ENCODE measurements at regions of chr11 and their contacts with region 1.

Region 1: DNA sequence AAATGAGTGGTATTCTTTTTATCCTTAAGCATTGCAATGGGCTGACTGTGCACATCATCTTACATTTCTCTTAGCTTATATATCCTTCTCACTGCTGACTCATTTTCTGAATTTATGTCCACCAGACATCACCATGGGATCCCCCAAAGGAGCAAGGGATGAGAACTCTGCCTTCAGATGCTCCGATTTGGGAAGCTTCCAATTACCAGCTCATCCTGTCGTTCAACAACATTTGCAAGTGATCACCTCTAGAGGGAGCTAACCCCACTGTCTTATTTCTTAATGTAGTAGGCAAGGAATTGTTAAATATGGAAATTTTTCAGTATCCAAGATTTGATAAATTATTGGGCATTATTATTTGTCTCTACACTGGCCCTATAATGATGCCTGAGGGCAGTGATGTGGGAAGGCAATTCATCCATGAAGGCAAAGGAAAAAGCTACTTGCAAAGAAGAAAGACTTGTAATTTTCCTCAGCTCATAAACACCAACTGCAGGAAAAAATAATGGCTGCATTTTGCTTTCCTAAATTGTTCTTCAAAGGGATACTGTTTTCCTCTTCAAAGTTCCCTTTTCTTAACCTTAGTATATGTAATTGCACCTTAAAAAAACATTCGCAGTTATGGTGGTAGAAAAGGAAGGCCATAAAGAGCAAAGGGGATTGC is 102.4 kb upstream of the FSHB start:
- DNase-seq: no peak
- H3K4me3 ChIP-seq: no peak overlapping the region
- H3K27ac ChIP-seq: no peak overlapping the region
- H3K4me1 ChIP-seq: no peaks in the 10 kb centered on the region
- H3K27me3 ChIP-seq: peaks cover 0 to 1% (median 0%) of the 10 kb centered on the region in 4 experiments; a peak in 2 of 7 replicates
- CTCF ChIP-seq: peak in 2 of 3 experiments; percentile 52 to 69; a peak in 2 of 4 replicates
- EP300 ChIP-seq: no peak
- POLR2A ChIP-seq: no peak
- RAD21 ChIP-seq: peak; percentile 53 to 56

Region 2: GRCh38 chr11:29669310-29669709 is 459.1 kb before region 1 on chr11:
- CTCF ChIA-PET with region 1: no interaction called
- POLR2A ChIA-PET with region 1: no interaction called
- DNase-seq: no peak
- H3K4me3 ChIP-seq: no peak overlapping the region
- H3K27ac ChIP-seq: no peak overlapping the region
- H3K4me1 ChIP-seq: no peaks in the 10 kb centered on the region
- H3K27me3 ChIP-seq: no peaks in the 10 kb centered on the region
- CTCF ChIP-seq: no peak
- EP300 ChIP-seq: no peak
- POLR2A ChIP-seq: no peak
- RAD21 ChIP-seq: no peak

Region 3: DNA sequence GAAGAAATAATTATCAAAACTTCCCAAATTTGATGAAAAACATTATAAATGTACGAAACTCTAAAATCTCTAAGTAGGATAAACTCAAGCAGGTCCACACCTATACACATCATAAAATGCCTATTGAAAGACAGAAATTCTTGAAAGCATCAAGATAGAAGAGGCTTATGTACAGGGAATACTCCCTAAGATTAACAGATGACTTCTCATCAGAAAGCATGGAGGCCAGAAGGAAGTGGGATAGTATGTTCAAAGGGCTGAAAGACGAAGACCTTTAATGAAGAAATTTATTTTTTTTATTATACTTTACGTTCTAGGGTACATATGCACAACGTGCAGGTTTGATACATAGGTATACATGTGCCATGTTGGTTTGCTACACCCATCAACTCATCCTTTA is 66.3 kb before region 1 on chr11:
- CTCF ChIA-PET with region 1: interaction called, 10 read pairs
- POLR2A ChIA-PET with region 1: no interaction called
- DNase-seq: no peak
- H3K4me3 ChIP-seq: no peak overlapping the region
- H3K27ac ChIP-seq: no peak overlapping the region
- H3K4me1 ChIP-seq: no peaks in the 10 kb centered on the region
- H3K27me3 ChIP-seq: no peaks in the 10 kb centered on the region
- CTCF ChIP-seq: no peak
- EP300 ChIP-seq: no peak
- POLR2A ChIP-seq: no peak
- RAD21 ChIP-seq: no peak

Region 4: DNA sequence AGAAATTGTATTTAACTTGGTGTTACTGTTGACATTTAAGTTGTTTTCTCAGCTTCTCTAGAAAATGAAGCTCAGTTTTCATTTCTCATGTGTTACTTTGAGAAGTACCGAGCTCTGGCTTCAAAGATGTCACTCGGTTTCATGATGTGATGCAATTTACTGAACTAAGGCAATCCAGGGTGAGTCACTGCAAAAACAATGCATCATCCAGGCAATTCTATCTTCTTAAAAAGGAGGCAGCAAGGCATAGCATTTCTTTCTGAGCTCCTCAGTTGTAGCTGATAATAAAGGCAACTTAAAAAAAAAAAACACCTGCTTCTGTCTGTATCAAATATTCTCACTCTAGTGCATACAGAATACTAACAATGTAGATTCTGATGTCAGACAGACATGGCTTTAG is 20.5 kb before region 1 on chr11:
- CTCF ChIA-PET with region 1: interaction called, 60 read pairs
- POLR2A ChIA-PET with region 1: no interaction called
- DNase-seq: no peak
- H3K4me3 ChIP-seq: no peak overlapping the region
- H3K27ac ChIP-seq: no peak overlapping the region
- H3K4me1 ChIP-seq: no peaks in the 10 kb centered on the region
- H3K27me3 ChIP-seq: peaks cover 8 to 31% (median 22%) of the 10 kb centered on the region in 4 experiments
- CTCF ChIP-seq: no peak
- EP300 ChIP-seq: no peak
- POLR2A ChIP-seq: no peak
- RAD21 ChIP-seq: no peak

Region 5: DNA sequence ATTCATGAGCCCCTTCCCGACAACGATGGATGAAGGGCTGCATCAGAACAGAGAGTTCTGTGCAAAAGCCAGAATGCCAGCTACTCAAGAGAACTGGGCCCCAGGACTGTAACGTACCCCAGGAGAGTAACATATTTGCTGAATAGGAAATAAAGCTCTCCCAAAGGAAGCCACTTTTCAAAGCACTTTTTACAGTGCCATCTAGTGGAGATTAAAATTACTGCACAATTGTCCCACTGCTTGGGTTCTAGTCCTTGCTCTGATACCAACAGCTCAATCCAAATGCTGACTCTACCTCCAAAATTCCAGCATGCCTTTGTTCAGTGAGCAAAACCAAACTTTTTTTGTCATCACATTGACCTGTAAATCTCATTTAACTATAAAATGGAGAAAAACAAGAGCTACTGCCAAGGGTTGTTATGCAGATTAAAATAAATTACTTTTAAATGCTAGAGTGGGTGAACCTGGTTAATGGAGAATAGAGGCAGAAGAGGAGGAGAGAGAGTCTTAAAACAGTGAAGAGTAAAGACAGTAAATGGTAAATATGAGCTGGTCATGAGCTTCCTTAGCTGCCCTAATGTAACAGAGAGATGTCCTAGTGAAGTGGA is 14.8 kb after region 1 on chr11:
- CTCF ChIA-PET with region 1: interaction called, 201 read pairs
- POLR2A ChIA-PET with region 1: no interaction called
- DNase-seq: no peak
- H3K4me3 ChIP-seq: no peak overlapping the region
- H3K27ac ChIP-seq: no peak overlapping the region
- H3K4me1 ChIP-seq: no peaks in the 10 kb centered on the region
- H3K27me3 ChIP-seq: no peaks in the 10 kb centered on the region; a peak in 1 of 7 replicates
- CTCF ChIP-seq: peak in 2 of 3 experiments; percentile 50 to 74; a peak in 3 of 4 replicates
- EP300 ChIP-seq: no peak
- POLR2A ChIP-seq: no peak
- RAD21 ChIP-seq: peak; percentile 68 to 70

Region 6: DNA sequence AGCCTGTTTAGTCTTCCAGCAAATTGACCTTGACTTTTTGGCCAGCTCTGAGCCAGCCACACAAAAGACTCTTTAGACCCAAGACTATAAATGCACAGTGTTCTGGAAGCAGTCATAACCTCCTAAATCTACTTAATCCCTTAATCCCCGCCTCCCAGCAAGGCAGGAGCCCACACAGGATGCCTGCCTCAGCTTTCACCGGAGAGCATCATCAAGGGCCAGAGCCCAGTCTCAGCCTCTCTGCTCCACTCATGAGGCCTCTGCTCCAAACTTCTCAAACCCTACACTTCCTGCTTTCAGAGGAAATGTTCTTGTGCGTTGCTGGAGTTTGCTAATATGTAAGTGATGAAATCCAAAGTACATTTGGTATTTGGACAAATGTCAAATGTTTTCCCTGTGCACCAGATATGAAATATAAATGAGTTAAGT is 44.5 kb after region 1 on chr11:
- CTCF ChIA-PET with region 1: interaction called, 10 read pairs
- POLR2A ChIA-PET with region 1: no interaction called
- DNase-seq: no peak
- H3K4me3 ChIP-seq: no peak overlapping the region
- H3K27ac ChIP-seq: no peak overlapping the region
- H3K4me1 ChIP-seq: no peaks in the 10 kb centered on the region
- H3K27me3 ChIP-seq: no peaks in the 10 kb centered on the region
- CTCF ChIP-seq: no peak
- EP300 ChIP-seq: no peak
- POLR2A ChIP-seq: no peak
- RAD21 ChIP-seq: no peak

Region 7: DNA sequence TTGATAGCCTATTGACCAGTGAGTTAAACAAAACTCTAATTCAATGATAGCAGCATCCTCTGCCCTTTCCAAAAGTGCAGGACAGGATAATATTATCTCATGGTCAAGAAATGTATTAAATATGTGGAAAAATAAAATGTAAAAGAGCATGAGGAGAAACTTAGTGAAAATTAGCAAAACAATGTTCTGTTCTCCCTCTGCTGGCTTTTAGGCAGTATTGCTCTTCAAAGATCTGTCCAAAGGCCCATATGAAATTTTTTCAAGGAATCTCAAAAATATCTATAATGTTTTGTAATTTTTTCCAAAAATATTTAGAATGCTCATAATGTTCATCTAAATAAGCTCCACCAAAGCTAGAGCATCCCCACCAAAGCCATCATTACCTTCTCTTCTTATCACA is 186.2 kb after region 1 on chr11:
- CTCF ChIA-PET with region 1: interaction called, 34 read pairs
- POLR2A ChIA-PET with region 1: no interaction called
- DNase-seq: no peak
- H3K4me3 ChIP-seq: no peak overlapping the region
- H3K27ac ChIP-seq: no peak overlapping the region
- H3K4me1 ChIP-seq: no peaks in the 10 kb centered on the region
- H3K27me3 ChIP-seq: no peaks in the 10 kb centered on the region; a peak in 1 of 7 replicates
- CTCF ChIP-seq: peak in 2 of 3 experiments; percentile 14 to 32; a peak in 2 of 4 replicates
- EP300 ChIP-seq: no peak
- POLR2A ChIP-seq: no peak
- RAD21 ChIP-seq: peak; percentile 27 to 42